ENCODE measurements at regions of chr20 and their contacts with region 1.

Region 1: GRCh38 chr20:10074513-10074912 is 39.7 kb downstream of the ANKEF1 start:
- DNase-seq: no peak
- ATAC-seq: peak; percentile 90
- H3K4me3 Mint-ChIP-seq: no peak overlapping the region
- H3K27ac Mint-ChIP-seq: no peak overlapping the region
- H3K4me1 Mint-ChIP-seq: peaks cover 8% of the 10 kb centered on the region
- H3K27me3 Mint-ChIP-seq: peaks cover 18% of the 10 kb centered on the region
- CTCF ChIP-seq: no peak

Region 2: DNA sequence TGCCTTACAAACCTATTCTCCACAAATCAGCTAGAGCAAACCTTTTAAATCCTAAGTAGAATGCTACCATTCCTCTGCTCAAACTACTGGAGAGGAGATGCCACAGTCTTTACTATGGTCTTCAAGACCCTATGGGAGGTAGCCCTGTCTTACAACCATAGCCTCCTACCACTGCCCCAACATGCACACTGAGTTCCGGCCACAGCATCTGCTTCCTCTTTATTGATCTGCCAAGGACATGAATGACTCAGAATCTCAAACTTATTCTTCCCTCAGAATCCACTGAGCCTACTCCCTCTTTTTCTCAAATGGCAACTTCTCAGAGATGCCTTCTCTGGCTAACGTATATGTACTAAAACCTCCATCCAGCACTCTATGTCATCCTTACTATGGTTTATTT is 51.9 kb before region 1 on chr20:
- CTCF ChIA-PET with region 1: no interaction called
- POLR2A ChIA-PET with region 1: no interaction called
- intact Hi-C with region 1: no loop called
- DNase-seq: no peak
- ATAC-seq: no peak
- H3K4me3 Mint-ChIP-seq: no peak overlapping the region
- H3K27ac Mint-ChIP-seq: no peak overlapping the region
- H3K4me1 Mint-ChIP-seq: no peaks in the 10 kb centered on the region
- H3K27me3 Mint-ChIP-seq: peaks cover 30% of the 10 kb centered on the region
- CTCF ChIP-seq: no peak

Region 3: DNA sequence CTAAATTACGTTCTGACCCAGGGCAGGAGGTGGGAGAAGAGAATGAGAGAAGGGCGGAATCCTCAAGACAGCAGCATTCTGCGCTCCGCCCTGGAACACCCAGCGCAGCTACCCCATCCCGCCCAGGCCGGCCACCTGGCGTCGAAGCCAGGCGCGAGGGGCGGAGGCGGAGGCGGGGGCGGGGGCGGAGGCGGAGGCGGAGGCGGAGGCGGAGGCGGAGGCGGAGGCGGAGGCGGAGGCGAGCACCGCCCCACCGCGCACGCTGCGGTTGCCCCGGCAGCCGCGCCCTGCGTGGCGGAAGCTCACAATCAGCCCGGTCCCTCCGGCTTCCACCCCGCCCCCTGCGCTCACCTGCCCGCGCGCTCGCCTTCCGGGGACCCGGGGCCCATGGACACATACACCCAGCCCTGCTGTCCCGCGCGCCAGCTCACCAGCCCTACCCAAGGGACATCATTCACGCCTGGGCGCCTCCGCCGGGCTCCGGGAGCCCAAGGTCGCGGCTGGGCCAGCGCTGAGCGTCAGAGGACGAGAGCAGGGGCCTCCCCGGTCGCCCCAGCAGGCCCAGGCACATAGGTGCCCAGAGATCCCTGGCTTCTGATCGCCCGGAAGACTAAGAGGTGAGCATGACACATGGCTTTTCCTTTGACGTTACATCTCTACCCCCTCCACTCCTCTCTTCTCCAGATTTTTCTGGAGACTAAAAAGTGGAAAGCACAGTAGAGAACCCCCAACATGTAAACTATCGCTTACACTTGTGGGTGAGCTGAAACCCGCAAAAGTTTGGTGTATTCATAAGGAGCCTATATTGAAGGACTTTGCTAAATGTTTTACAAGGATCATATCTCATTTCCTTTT is 39.6 kb before region 1 on chr20 and contains the start of gene ANKEF1:
- CTCF ChIA-PET with region 1: no interaction called
- POLR2A ChIA-PET with region 1: no interaction called
- intact Hi-C with region 1: loop called (anchors 1 kb)
- DNase-seq: peak; percentile 73
- ATAC-seq: peak; percentile 97
- H3K4me3 Mint-ChIP-seq: peak within 1 kb of the TSS; percentile 75
- H3K27ac Mint-ChIP-seq: no peak within 1 kb of the TSS
- H3K4me1 Mint-ChIP-seq: peaks cover 6% of the 10 kb centered on the region
- H3K27me3 Mint-ChIP-seq: peaks cover 13% of the 10 kb centered on the region
- CTCF ChIP-seq: no peak
- total RNA-seq, gene ANKEF1: 2.0 and 2.6 TPM in 2 replicates

Region 4: DNA sequence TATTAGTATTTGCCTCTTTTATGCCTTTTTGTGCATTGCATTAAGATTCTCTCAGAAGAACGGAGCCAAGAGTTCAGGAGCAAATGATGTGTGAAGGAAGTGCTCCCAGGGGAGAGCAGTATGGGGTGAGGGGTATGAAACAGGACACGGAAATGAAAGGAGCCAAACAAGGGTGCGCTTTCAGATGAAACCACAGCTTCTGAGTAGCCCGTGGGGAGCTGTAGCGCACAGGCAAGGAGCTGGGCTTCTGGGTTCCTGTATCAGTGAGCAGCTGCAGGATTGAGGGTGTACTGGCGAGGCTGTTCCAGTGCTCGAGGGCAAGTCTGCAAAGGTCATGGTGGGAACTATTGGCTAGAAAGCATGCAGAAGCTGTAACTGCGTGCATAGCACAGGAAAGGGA is 14.3 kb before region 1 on chr20:
- CTCF ChIA-PET with region 1: no interaction called
- POLR2A ChIA-PET with region 1: no interaction called
- intact Hi-C with region 1: loop called (anchors 1 kb)
- DNase-seq: no peak
- ATAC-seq: peak; percentile 100
- H3K4me3 Mint-ChIP-seq: peak overlapping the region; percentile 6
- H3K27ac Mint-ChIP-seq: no peak overlapping the region
- H3K4me1 Mint-ChIP-seq: peaks cover 17% of the 10 kb centered on the region
- H3K27me3 Mint-ChIP-seq: peaks cover 38% of the 10 kb centered on the region
- CTCF ChIP-seq: no peak

Measured in activated B cell treated with CpG ODN at 0.5 μM for 24 hours (primary cell).